ENCODE measurements at regions of chr12 and their contacts with region 1.

Region 1: DNA sequence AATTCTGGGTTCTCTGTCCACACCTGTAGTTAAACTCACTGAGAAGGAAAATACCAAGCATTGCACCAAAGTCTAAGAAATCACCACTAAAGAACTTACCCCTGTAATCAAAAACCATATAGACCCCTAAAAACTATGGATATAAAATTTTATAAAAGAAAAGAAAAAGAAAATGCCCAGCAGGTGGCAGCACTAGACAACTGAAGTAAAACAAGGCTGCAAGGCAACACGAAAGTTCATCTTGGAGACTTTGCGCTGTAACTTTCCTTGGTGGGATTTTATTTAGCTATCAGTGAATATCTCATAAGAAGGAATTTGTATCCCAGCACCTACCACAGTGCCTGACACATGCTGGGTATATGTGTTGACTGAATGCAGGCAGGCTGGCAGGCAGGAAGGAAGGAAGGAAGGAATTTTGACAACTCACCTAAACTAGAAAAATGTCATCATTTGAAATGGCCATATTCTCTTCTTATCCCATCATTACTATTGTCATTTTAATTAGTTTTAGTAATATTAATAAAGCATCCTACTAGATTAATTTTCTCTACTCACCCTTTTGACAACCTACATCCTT is 68.2 kb upstream of the ETV6 start:
- DNase-seq: peak; percentile 70 to 79 (median 74)
- ATAC-seq: no peak
- H3K4me3 ChIP-seq: no peak overlapping the region
- H3K27ac ChIP-seq: no peak overlapping the region
- H3K4me1 ChIP-seq: no peaks in the 10 kb centered on the region
- H3K27me3 ChIP-seq: no peaks in the 10 kb centered on the region
- CTCF ChIP-seq: peak; percentile 35 to 78 (median 72)
- POLR2A ChIP-seq: no peak

Region 2: GRCh38 chr12:10320643-10321042 is 1260.6 kb before region 1 on chr12:
- intact Hi-C with region 1: no loop called
- DNase-seq: no peak
- ATAC-seq: no peak
- H3K4me3 ChIP-seq: no peak overlapping the region
- H3K27ac ChIP-seq: no peak overlapping the region
- H3K4me1 ChIP-seq: no peaks in the 10 kb centered on the region
- H3K27me3 ChIP-seq: no peaks in the 10 kb centered on the region
- CTCF ChIP-seq: no peak
- POLR2A ChIP-seq: no peak

Region 3: GRCh38 chr12:12024911-12025682 is 443.8 kb after region 1 on chr12:
- intact Hi-C with region 1: loop called (anchors 5 kb)
- DNase-seq: no peak
- ATAC-seq: no peak
- H3K4me3 ChIP-seq: no peak overlapping the region
- H3K27ac ChIP-seq: no peak overlapping the region
- H3K4me1 ChIP-seq: no peaks in the 10 kb centered on the region
- H3K27me3 ChIP-seq: no peaks in the 10 kb centered on the region
- CTCF ChIP-seq: no peak
- POLR2A ChIP-seq: no peak